ENCODE measurements at regions of chr12 and their contacts with region 1.

Region 1: DNA sequence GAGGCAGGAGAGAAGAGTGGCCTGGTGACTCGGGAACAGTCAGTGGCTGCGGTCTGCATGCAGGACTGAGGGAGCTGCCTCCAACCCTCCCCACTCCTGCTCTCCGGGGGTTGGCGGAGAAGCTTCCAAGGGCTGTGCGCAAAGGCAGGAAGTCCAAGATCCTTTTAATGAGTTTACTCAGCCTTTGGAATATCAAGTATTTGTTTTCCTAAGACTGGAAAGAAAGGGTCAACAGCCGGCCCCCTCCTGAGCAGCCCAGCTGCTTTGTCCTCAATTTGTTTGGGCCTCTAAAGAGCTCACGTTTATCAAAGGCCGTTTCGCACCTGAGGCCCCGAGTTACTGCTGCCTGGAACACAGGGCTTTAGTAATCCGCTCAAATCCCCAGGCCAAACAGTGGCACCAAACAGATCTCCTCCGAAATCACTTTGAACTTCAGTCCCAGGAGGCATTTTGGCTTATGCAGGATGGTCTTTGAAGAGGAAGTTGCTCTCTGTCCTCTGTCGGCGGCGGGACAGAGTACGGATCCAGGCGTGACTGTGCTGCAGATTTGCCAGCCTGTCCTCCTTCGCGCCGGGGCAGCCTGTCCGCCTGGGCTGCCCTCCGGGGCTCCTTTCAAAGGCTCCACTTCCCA is 117.2 kb upstream of the FZD10 start:
- DNase-seq: no peak
- H3K4me3 ChIP-seq: no peak overlapping the region
- H3K27ac ChIP-seq: no peak overlapping the region
- H3K4me1 ChIP-seq: no peaks in the 10 kb centered on the region
- H3K27me3 ChIP-seq: no peaks in the 10 kb centered on the region
- CTCF ChIP-seq: no peak
- POLR2A ChIP-seq: no peak

Region 2: GRCh38 chr12:130155416-130156073 is 110.4 kb after region 1 on chr12:
- intact Hi-C with region 1: no loop called
- DNase-seq: no peak
- H3K4me3 ChIP-seq: no peak overlapping the region
- H3K27ac ChIP-seq: no peak overlapping the region
- H3K4me1 ChIP-seq: no peaks in the 10 kb centered on the region
- H3K27me3 ChIP-seq: no peaks in the 10 kb centered on the region
- CTCF ChIP-seq: no peak
- POLR2A ChIP-seq: no peak

Region 3: DNA sequence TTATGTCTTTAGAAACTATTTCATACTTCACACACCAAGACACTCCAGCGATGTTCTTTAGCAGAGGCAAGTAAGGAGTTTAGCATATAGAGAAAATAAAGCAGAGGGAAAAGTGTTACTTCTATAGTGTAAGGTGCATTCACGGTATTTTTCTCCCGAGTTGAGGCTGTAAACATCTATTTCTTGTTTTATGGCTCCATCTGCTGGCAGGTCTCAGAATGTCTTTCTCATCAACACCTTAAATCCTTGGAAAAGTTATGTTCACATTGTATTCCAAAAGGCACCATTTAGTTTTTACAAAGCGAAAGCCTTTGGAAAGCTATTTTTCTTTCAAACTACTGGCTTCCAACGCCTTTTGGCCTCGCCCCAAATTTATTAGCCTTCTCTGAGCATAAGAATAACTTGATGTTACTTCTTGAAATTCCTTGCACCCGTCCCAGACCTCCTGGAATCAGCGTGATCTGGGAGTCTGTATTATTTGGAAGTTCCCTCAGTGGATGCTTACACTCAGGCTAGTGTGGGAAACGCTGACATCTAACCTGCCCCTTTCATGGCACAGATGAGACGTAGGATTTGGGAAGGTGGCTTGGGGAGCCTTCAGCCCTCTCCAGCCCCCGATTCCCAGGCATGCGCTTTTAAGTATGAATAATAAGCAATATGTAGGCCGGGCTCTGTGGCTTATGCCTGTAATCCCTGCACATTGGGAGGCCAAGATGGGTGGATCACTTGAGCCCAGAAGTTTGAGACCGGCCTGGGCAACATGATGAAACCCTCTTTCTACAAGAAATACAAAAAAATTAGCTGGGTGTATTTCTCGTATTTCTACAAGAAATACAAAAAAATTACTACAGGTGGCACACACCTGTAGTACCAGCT is 290.6 kb after region 1 on chr12:
- intact Hi-C with region 1: loop called (anchors 5 kb)
- DNase-seq: peak; percentile 81
- H3K4me3 ChIP-seq: no peak overlapping the region
- H3K27ac ChIP-seq: no peak overlapping the region
- H3K4me1 ChIP-seq: no peaks in the 10 kb centered on the region
- H3K27me3 ChIP-seq: no peaks in the 10 kb centered on the region
- CTCF ChIP-seq: peak; percentile 56 to 64 (median 61)
- POLR2A ChIP-seq: no peak

Measured in testis (tissue), 5 donors.